Heart left ventricle (tissue), 16 donors: ENCODE measurements at regions of chr2 and their contacts with region 1.

Region 1: GRCh38 chr2:165469417-165469816 is at the start of gene CSRNP3:
- DNase-seq: peak in 4 of 5 donors; percentile 62 to 70 (median 66)
- ATAC-seq: peak; percentile 99 to 100 (median 100)
- H3K4me3 ChIP-seq: peak within 1 kb of the TSS; percentile 35 to 62 (median 49)
- H3K27ac ChIP-seq: peak within 1 kb of the TSS in 5 of 12 donors; percentile 7 to 32 (median 22)
- H3K4me1 ChIP-seq: peaks cover 0 to 27% (median 7%) of the 10 kb centered on the region in 12 donors
- H3K27me3 ChIP-seq: no peaks in the 10 kb centered on the region
- CTCF ChIP-seq: peak in 2 of 12 donors; percentile 17 to 31
- POLR2A ChIP-seq: no peak
- total RNA-seq, gene CSRNP3: 3.2 to 10.6 (median 5.1) TPM

Region 2: GRCh38 chr2:165563468-165564225 is 94.2 kb after region 1 on chr2:
- intact Hi-C with region 1: loop called in 1 of 10 experiments (anchors 5 kb)
- DNase-seq: no peak
- ATAC-seq: no peak
- H3K4me3 ChIP-seq: no peak overlapping the region
- H3K27ac ChIP-seq: no peak overlapping the region
- H3K4me1 ChIP-seq: peaks cover 0 to 17% (median 0%) of the 10 kb centered on the region in 12 donors
- H3K27me3 ChIP-seq: no peaks in the 10 kb centered on the region
- CTCF ChIP-seq: peak in 1 of 12 donors; percentile 7
- POLR2A ChIP-seq: no peak

Region 3: DNA sequence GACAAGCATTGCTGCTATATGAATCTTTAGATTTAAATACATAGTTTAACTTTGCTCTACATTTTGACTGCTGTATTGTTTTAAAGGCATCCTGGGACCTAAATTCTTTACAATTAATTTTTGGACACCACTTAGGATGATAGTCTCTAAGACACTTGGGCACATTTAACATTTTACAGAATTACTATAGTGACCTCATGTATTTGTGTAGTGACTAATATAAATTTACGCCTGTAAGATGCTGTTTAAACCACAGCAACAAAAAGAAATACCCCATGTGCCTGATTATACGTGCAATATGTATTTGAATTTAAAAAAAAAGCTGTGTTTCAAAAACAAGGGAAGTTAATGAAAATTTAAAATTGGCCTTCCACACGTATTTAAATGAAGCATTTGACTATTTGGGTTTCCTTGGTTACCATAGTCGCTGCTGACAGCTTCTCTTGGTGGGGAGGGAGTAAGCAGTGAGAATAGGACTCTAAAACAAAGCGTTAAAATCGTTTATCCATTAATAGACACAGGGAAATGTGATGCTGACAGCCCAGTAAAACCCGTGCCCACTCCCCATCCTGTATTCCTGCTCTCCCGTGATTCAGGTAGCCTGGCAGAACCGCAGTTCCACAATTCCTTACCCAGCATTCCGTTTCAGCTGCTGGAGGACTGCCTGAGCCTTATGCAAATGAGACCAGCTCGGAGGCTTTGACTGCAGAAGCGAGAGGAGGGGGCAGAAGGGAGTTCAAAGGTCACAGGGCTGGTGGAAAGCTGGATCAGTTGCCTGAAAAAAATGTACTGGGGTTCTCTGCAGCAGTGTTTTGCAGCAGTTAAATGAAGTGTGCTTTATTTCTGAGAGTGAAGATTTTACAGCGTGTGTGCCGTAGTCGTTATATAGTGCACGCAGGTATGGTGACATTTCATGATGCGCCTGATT is 104.4 kb after region 1 on chr2:
- intact Hi-C with region 1: loop called in 2 of 10 experiments (anchors 5 to 10 kb)
- DNase-seq: peak; percentile 46 to 61 (median 54)
- ATAC-seq: peak; percentile 77 to 93 (median 92)
- H3K4me3 ChIP-seq: peak overlapping the region; percentile 3 to 58 (median 50)
- H3K27ac ChIP-seq: peak overlapping the region in 5 of 12 donors; percentile 5 to 38 (median 10)
- H3K4me1 ChIP-seq: peaks cover 0 to 30% (median 5%) of the 10 kb centered on the region in 12 donors
- H3K27me3 ChIP-seq: no peaks in the 10 kb centered on the region
- CTCF ChIP-seq: no peak
- POLR2A ChIP-seq: no peak